Activated CD4-positive, alpha-beta memory T cell treated with anti-CD3 and anti-CD28 coated beads, Interleukin-2, amount 10 ng/mL, durations not matched to agents 7 days and 5 days (primary cell): ENCODE measurements at regions of chr11 and their contacts with region 1.

Region 1: DNA sequence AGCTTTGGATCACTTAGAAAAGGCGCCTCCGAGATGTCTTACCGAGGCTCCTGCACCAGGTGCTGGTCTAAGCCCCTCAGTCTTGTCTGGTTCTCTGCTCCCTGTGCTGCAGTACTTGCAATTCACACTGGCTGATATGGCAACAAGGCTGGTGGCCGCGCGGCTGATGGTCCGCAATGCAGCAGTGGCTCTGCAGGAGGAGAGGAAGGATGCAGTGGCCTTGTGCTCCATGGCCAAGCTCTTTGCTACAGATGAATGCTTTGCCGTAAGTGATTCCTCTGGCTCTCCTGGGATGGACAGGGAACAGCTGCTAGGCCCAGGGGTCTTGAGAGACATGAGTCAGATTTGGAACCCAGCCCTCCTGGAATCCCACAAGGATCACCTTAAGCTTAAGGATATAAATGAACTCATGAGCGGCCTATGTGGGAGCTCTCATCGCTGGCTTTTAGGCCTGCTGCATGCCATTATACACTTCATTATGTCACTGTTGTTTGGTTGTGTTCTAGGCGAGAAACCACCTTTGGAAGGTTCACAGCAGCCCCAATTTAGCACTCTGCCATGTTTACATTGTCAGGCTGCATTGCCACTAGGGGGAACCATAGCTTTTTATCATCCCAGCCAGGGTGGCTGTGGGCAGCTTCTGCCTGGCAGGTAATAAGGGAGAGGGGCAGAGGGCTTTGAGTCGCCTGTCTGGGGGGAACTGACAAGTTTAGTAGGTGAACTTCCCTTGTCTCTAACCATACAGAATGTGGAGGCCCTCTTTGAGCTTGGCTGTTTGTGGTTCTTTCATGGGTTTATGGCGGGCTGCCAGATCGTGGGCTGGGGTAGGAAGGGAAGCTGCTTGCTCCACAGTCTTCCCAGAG is 8.5 kb downstream of the ACAD8 start:
- DNase-seq: peak; percentile 46
- H3K4me3 Mint-ChIP-seq: no peak overlapping the region
- H3K27ac Mint-ChIP-seq: no peak overlapping the region
- H3K4me1 Mint-ChIP-seq: peaks cover 17% of the 10 kb centered on the region
- H3K27me3 Mint-ChIP-seq: no peaks in the 10 kb centered on the region

Region 2: GRCh38 chr11:134244655-134245054 is 17.2 kb before region 1 on chr11:
- CTCF ChIA-PET with region 1: interaction called, 8 read pairs
- POLR2A ChIA-PET with region 1: interaction called, 11 read pairs
- DNase-seq: no peak
- H3K4me3 Mint-ChIP-seq: no peak overlapping the region
- H3K27ac Mint-ChIP-seq: no peak overlapping the region
- H3K4me1 Mint-ChIP-seq: peaks cover 13% of the 10 kb centered on the region
- H3K27me3 Mint-ChIP-seq: no peaks in the 10 kb centered on the region

Region 3: GRCh38 chr11:134821422-134821821 is 559.6 kb after region 1 on chr11:
- CTCF ChIA-PET with region 1: no interaction called
- POLR2A ChIA-PET with region 1: no interaction called
- DNase-seq: no peak
- H3K4me3 Mint-ChIP-seq: no peak overlapping the region
- H3K27ac Mint-ChIP-seq: no peak overlapping the region
- H3K4me1 Mint-ChIP-seq: no peaks in the 10 kb centered on the region
- H3K27me3 Mint-ChIP-seq: peaks cover 9% of the 10 kb centered on the region